ENCODE measurements at regions of chr6 and their contacts with region 1.

Region 1: DNA sequence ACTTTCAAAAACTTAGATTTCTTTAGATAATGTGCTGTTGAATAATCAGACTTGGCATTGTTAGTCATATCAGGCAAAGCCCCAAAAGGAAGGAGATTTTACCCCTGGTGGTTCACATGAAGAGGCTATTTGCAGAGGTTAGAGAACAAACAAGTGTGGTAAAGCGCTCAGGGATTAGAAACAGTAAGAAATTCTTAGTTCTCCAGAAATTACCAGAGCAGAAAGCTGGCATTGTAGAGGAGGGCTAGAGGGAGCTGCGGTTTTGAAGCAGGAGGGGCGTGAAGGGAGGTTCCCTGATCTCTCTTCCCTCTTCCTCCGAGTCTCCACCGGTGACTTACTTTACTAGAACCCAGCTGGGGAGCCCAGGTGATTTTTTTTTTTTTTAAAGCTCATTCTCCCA is 10.2 kb downstream of the MYO6 start:
- DNase-seq: no peak

Region 2: GRCh38 chr6:75788894-75789293 is 29.7 kb after region 1 on chr6:
- intact Hi-C with region 1: loop called in 1 of 2 experiments (anchors 1 kb)
- DNase-seq: no peak

Region 3: GRCh38 chr6:75800133-75800532 is 40.9 kb after region 1 on chr6:
- intact Hi-C with region 1: no loop called
- DNase-seq: no peak

Region 4: GRCh38 chr6:77368660-77369313 is 1609.6 kb after region 1 on chr6:
- intact Hi-C with region 1: no loop called
- DNase-seq: peak; percentile 79